HEK293 (cell line): ENCODE measurements at regions of chr20 and their contacts with region 1.

Region 1: GRCh38 chr20:64119681-64120341 is 12.4 kb upstream of the NPBWR2 start:
- H3K4me3 ChIP-seq: no peak overlapping the region
- H3K27ac ChIP-seq: no peak overlapping the region
- H3K4me1 ChIP-seq: no peaks in the 10 kb centered on the region
- CTCF ChIP-seq: no peak

Region 2: GRCh38 chr20:63980806-63981728 is 138.7 kb before region 1 on chr20 and contains the start of gene PRPF6:
- CTCF ChIA-PET with region 1: interaction called, 18 read pairs
- POLR2A ChIA-PET with region 1: interaction called, 4 read pairs
- H3K4me3 ChIP-seq: peak within 1 kb of the TSS; percentile 95
- H3K27ac ChIP-seq: peak within 1 kb of the TSS; percentile 78
- H3K4me1 ChIP-seq: peaks cover 13% of the 10 kb centered on the region
- CTCF ChIP-seq: peak; percentile 100

Region 3: DNA sequence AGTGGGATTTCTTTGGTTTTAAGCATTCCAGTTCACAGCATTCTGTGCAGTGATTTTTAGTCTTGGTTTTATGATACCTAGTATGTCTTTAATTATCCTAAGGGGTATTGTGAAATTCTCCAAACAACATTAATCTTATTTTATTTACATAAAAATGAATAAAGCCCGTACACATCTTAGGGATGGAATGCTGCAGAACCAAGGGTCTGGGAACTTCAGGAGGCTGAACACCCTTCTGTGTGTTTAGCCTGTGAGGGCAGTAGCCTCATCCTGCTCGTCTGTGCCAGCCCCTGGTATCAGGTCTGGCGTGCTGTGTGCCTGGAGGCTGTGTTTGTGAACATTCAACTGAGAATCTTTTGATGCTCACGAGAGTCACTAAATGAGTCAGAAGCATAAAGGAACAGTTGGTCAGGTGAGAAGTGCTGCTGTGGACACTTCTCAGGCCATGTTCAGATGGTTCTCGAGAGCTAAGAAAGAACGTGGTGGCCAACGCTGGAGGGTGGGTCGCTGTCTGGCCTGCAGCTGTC is 109.0 kb before region 1 on chr20:
- CTCF ChIA-PET with region 1: no interaction called
- POLR2A ChIA-PET with region 1: no interaction called
- H3K4me3 ChIP-seq: no peak overlapping the region
- H3K27ac ChIP-seq: no peak overlapping the region
- H3K4me1 ChIP-seq: no peaks in the 10 kb centered on the region
- CTCF ChIP-seq: no peak

Region 4: GRCh38 chr20:64083378-64083803 is 36.4 kb before region 1 on chr20:
- CTCF ChIA-PET with region 1: interaction called, 35 read pairs
- POLR2A ChIA-PET with region 1: no interaction called
- H3K4me3 ChIP-seq: peak overlapping the region; percentile 35
- H3K27ac ChIP-seq: no peak overlapping the region
- H3K4me1 ChIP-seq: peaks cover 6% of the 10 kb centered on the region
- CTCF ChIP-seq: peak; percentile 26

Region 5: GRCh38 chr20:64090165-64090564 is 29.6 kb before region 1 on chr20:
- CTCF ChIA-PET with region 1: interaction called, 35 read pairs
- POLR2A ChIA-PET with region 1: no interaction called
- H3K4me3 ChIP-seq: no peak overlapping the region
- H3K27ac ChIP-seq: no peak overlapping the region
- H3K4me1 ChIP-seq: no peaks in the 10 kb centered on the region
- CTCF ChIP-seq: no peak

Region 6: GRCh38 chr20:64101731-64102621 is 17.8 kb before region 1 on chr20:
- CTCF ChIA-PET with region 1: interaction called, 10 read pairs
- POLR2A ChIA-PET with region 1: interaction called, 4 read pairs
- H3K4me3 ChIP-seq: peak overlapping the region; percentile 39
- H3K27ac ChIP-seq: no peak overlapping the region
- H3K4me1 ChIP-seq: no peaks in the 10 kb centered on the region
- CTCF ChIP-seq: peak; percentile 91

Region 7: GRCh38 chr20:64106981-64107735 is 12.7 kb before region 1 on chr20 and contains the start of gene NPBWR2:
- CTCF ChIA-PET with region 1: interaction called, 15 read pairs
- POLR2A ChIA-PET with region 1: interaction called, 4 read pairs
- H3K4me3 ChIP-seq: no peak within 1 kb of the TSS
- H3K27ac ChIP-seq: no peak within 1 kb of the TSS
- H3K4me1 ChIP-seq: no peaks in the 10 kb centered on the region
- CTCF ChIP-seq: no peak

Region 8: DNA sequence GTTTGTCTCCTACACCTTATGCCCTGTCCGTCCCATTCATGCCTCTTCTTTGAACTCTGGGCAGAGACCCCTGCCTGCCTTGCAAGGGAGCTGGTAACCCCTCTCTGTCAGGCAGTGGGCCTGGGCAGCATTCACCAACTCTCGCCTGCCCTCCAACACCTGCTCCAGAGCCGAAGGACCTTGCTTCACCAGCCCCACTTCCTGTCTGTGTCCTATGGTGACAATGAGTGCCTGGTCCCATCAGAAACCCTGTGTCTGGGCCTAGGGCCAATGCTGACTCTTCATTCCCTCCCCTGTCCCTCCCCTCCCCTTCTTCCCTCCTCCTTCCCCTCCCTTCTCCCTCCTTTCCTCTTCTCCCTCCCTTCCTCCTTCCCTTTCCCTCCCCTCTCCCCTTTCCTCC is 113.0 kb after region 1 on chr20:
- CTCF ChIA-PET with region 1: no interaction called
- POLR2A ChIA-PET with region 1: no interaction called
- H3K4me3 ChIP-seq: no peak overlapping the region
- H3K27ac ChIP-seq: no peak overlapping the region
- H3K4me1 ChIP-seq: no peaks in the 10 kb centered on the region
- CTCF ChIP-seq: no peak

Region 9: GRCh38 chr20:64247970-64248841 is 128.4 kb after region 1 on chr20:
- CTCF ChIA-PET with region 1: no interaction called
- POLR2A ChIA-PET with region 1: no interaction called
- H3K4me3 ChIP-seq: no peak overlapping the region
- H3K27ac ChIP-seq: no peak overlapping the region
- H3K4me1 ChIP-seq: no peaks in the 10 kb centered on the region
- CTCF ChIP-seq: no peak